PC-9 (cell line): ENCODE measurements at regions of chr5 and their contacts with region 1.

Region 1: GRCh38 chr5:68424799-68425537 is 209.4 kb downstream of the PIK3R1 start:
- DNase-seq: peak; percentile 4 to 81
- H3K4me3 ChIP-seq: no peak overlapping the region
- H3K27ac ChIP-seq: peak overlapping the region; percentile 74
- H3K4me1 ChIP-seq: peaks cover 35% of the 10 kb centered on the region
- H3K27me3 ChIP-seq: no peaks in the 10 kb centered on the region
- CTCF ChIP-seq: no peak

Region 2: GRCh38 chr5:68277431-68277830 is 147.5 kb before region 1 on chr5:
- CTCF ChIA-PET with region 1: no interaction called
- POLR2A ChIA-PET with region 1: interaction called, 23 read pairs
- intact Hi-C with region 1: no loop called
- DNase-seq: peak; percentile 57 to 77
- H3K4me3 ChIP-seq: no peak overlapping the region
- H3K27ac ChIP-seq: peak overlapping the region; percentile 50
- H3K4me1 ChIP-seq: peaks cover 17% of the 10 kb centered on the region
- H3K27me3 ChIP-seq: no peaks in the 10 kb centered on the region
- CTCF ChIP-seq: no peak

Region 3: DNA sequence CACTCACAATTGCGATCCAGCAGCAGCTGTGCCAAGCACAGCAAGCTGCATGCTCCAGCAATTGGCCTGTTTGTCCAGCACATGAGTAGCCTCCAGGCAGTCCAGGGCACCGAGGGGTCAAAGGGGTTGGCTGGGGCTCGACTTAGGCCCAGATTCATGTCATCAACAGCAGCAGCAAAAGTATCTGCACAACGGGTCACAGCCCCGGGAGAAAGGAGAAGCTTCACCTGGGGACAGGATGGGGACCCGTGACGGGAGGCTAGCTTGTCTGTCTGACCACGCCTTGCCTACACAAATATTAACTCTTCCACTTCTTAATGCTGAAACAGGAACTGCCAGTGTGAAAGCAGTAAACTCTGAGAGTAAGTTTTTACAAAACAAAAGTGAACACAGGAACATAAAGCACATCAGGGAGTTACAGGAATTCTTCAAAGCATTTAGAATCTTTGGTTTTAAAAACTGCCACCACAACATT is 18.2 kb before region 1 on chr5:
- CTCF ChIA-PET with region 1: no interaction called
- POLR2A ChIA-PET with region 1: no interaction called
- intact Hi-C with region 1: no loop called
- DNase-seq: peak in 1 of 2 experiments; percentile 7
- H3K4me3 ChIP-seq: no peak overlapping the region
- H3K27ac ChIP-seq: no peak overlapping the region
- H3K4me1 ChIP-seq: peaks cover 24% of the 10 kb centered on the region
- H3K27me3 ChIP-seq: no peaks in the 10 kb centered on the region
- CTCF ChIP-seq: no peak